Right ventricle myocardium inferior (tissue), 1 donor: ENCODE measurements at regions of chr12 and their contacts with region 1.

Region 1: GRCh38 chr12:101759396-101760047 is 20.3 kb upstream of the SYCP3 start:
- DNase-seq: no peak
- ATAC-seq: no peak

Region 2: GRCh38 chr12:101414533-101415119 is 344.9 kb before region 1 on chr12:
- intact Hi-C with region 1: loop called (anchors 10 kb)
- DNase-seq: no peak
- ATAC-seq: no peak